A673 (cell line): ENCODE measurements at regions of chr1 and their contacts with region 1.

Region 1: GRCh38 chr1:117942293-117942692 is 12.8 kb downstream of the WDR3 start:
- DNase-seq: no peak
- H3K4me3 ChIP-seq: no peak overlapping the region
- H3K27ac ChIP-seq: no peak overlapping the region
- H3K4me1 ChIP-seq: no peaks in the 10 kb centered on the region
- H3K27me3 ChIP-seq: no peaks in the 10 kb centered on the region
- CTCF ChIP-seq: no peak

Region 2: GRCh38 chr1:117534995-117535467 is 407.3 kb before region 1 on chr1:
- CTCF ChIA-PET with region 1: no interaction called
- POLR2A ChIA-PET with region 1: no interaction called
- intact Hi-C with region 1: no loop called
- DNase-seq: peak; percentile 82
- H3K4me3 ChIP-seq: no peak overlapping the region
- H3K27ac ChIP-seq: no peak overlapping the region
- H3K4me1 ChIP-seq: no peaks in the 10 kb centered on the region
- H3K27me3 ChIP-seq: no peaks in the 10 kb centered on the region
- CTCF ChIP-seq: peak; percentile 73

Region 3: DNA sequence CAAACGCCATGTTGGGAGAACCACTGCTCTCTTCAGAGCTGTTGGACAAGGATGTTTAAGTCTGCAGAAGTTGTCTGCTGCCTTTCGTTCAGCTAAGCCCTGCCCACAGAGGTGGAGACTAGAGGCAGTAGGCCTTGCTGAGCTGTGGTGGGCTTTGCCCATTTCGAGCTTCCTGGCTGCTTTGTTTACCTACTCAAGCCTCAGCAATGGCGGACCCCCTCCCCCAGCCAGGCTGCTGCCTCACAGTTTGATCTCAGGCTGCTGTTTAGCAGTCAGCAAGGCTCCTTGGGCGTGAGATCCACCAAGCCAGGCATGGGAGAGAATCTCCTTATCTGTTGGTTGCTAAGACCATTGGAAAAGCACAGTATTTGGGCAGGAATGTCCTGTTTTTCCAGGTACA is 62.0 kb after region 1 on chr1:
- CTCF ChIA-PET with region 1: no interaction called
- POLR2A ChIA-PET with region 1: no interaction called
- intact Hi-C with region 1: loop called (anchors 2 kb)
- DNase-seq: no peak
- H3K4me3 ChIP-seq: no peak overlapping the region
- H3K27ac ChIP-seq: no peak overlapping the region
- H3K4me1 ChIP-seq: no peaks in the 10 kb centered on the region
- H3K27me3 ChIP-seq: no peaks in the 10 kb centered on the region
- CTCF ChIP-seq: no peak